CD4-positive, alpha-beta T cell (primary cell): ENCODE measurements at regions of chr7 and their contacts with region 1.

Region 1: DNA sequence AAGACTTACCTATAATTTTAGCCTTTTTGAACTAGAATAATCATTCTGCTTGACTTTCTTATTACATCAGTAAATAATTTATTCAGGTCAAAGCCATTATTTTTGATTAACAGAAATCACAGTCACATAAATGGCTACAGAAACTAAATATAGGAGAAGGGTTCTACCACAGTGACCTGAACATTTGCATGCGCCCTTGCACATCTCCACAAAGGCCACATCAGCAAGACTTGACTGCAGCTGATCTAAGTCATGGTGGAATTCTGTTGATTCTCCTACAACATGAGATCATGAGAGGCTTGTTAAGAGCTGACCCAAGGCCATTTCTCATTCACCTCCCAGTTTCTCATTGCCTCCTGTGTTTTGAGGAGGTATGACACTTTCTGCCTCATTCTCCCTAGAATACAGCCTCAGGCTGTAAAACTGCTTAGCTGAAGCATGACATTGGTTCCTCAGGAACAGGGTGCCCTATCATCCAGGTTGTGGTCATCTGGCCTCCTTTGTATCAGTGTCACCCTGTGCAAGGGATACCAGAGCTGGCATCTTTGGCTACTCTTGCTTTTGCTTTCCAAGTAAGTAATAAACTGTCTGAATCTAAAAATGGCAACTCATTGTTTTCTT is 6.7 kb upstream of the IMMP2L start:
- DNase-seq: no peak
- ATAC-seq: no peak
- H3K4me3 ChIP-seq: no peak overlapping the region
- H3K4me3 Mint-ChIP-seq: no peak overlapping the region
- H3K27ac ChIP-seq: no peak overlapping the region
- H3K27ac Mint-ChIP-seq: no peak overlapping the region
- H3K4me1 ChIP-seq: no peaks in the 10 kb centered on the region
- H3K4me1 Mint-ChIP-seq: no peaks in the 10 kb centered on the region
- H3K27me3 ChIP-seq: peaks cover 0 to 4% of the 10 kb centered on the region in 2 experiments
- H3K27me3 Mint-ChIP-seq: peaks cover 25% of the 10 kb centered on the region
- CTCF ChIP-seq: no peak

Region 2: GRCh38 chr7:111914261-111914660 is 345.3 kb after region 1 on chr7:
- CTCF ChIA-PET with region 1: no interaction called
- POLR2A ChIA-PET with region 1: no interaction called
- intact Hi-C with region 1: no loop called
- DNase-seq: no peak
- ATAC-seq: no peak
- H3K4me3 ChIP-seq: no peak overlapping the region
- H3K4me3 Mint-ChIP-seq: no peak overlapping the region
- H3K27ac ChIP-seq: no peak overlapping the region
- H3K27ac Mint-ChIP-seq: no peak overlapping the region
- H3K4me1 ChIP-seq: no peaks in the 10 kb centered on the region
- H3K4me1 Mint-ChIP-seq: no peaks in the 10 kb centered on the region
- H3K27me3 ChIP-seq: no peaks in the 10 kb centered on the region
- H3K27me3 Mint-ChIP-seq: peaks cover 21% of the 10 kb centered on the region
- CTCF ChIP-seq: no peak

Region 3: GRCh38 chr7:112199035-112199655 is 630.2 kb after region 1 on chr7:
- CTCF ChIA-PET with region 1: no interaction called
- POLR2A ChIA-PET with region 1: no interaction called
- intact Hi-C with region 1: loop called in 1 of 2 experiments (anchors 5 kb)
- DNase-seq: no peak
- ATAC-seq: no peak
- H3K4me3 ChIP-seq: no peak overlapping the region
- H3K4me3 Mint-ChIP-seq: no peak overlapping the region
- H3K27ac ChIP-seq: no peak overlapping the region
- H3K27ac Mint-ChIP-seq: no peak overlapping the region
- H3K4me1 ChIP-seq: peaks cover 4% of the 10 kb centered on the region
- H3K4me1 Mint-ChIP-seq: peaks cover 10% of the 10 kb centered on the region
- H3K27me3 ChIP-seq: peaks cover 22 to 78% of the 10 kb centered on the region in 2 experiments
- H3K27me3 Mint-ChIP-seq: peaks cover 82% of the 10 kb centered on the region
- CTCF ChIP-seq: no peak